ENCODE measurements at regions of chr9 and their contacts with region 1.

Region 1: GRCh38 chr9:32526041-32526706 is at the start of gene RIGI:
- DNase-seq: peak; percentile 83
- ATAC-seq: peak; percentile 84
- H3K4me3 Mint-ChIP-seq: peak within 1 kb of the TSS; percentile 82
- H3K27ac Mint-ChIP-seq: peak within 1 kb of the TSS; percentile 97
- H3K4me1 Mint-ChIP-seq: peaks cover 14% of the 10 kb centered on the region
- H3K27me3 Mint-ChIP-seq: no peaks in the 10 kb centered on the region
- CTCF ChIP-seq: peak; percentile 41; the same call in 1 of the 2 replicates
- total RNA-seq, gene RIGI: 6.0 to 7.5 TPM (median 6.2 TPM) in 3 replicates

Region 2: DNA sequence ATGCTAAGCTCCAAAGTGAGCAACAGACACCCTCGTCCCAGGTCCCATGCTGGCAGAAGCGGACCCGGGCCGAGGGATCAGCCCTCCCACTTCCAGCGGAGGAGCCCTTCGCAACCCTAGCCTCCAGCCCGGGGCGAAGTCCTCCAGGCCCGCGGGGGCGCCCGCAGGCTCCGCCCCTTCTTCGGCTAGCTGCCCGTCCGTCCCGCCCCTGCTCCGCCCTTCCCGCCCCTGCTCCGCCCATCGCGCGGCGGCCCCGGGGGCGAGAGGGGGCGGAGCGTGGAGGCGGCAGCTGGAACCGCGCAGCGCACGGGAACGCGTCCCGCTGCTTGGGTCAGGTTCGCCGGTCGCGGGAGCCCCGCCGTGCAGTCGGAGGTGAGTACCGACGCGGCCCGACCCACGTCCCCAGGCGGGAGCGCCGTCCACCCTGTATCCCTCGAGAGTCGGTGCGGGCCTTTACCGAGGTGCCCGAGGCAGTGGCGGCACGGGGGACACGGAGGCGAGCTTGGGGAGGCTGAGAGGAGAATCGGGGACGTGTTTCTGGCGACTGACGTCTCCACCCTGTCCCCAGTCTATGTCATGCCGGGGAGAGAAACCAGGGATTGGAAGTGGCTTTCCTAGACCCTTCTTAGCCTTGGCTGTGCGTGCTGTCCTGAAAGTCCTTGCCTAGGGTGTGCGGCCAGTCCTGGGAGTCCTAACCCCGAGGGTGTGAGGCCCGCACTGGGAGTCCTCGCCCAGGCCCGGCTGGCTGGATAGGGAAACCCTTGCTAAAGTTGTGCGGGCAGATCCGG is 141.6 kb before region 1 on chr9 and contains the start of gene ACO1:
- CTCF ChIA-PET with region 1: interaction called, 94 read pairs
- POLR2A ChIA-PET with region 1: interaction called, 5 read pairs
- DNase-seq: peak; percentile 92
- ATAC-seq: peak; percentile 94
- H3K4me3 Mint-ChIP-seq: peak within 1 kb of the TSS; percentile 86
- H3K27ac Mint-ChIP-seq: no peak within 1 kb of the TSS
- H3K4me1 Mint-ChIP-seq: peaks cover 18% of the 10 kb centered on the region
- H3K27me3 Mint-ChIP-seq: peaks cover 31% of the 10 kb centered on the region
- CTCF ChIP-seq: no peak
- total RNA-seq, gene ACO1: 40.2 to 44.8 TPM (median 44.5 TPM) in 3 replicates

Region 3: GRCh38 chr9:32502464-32502863 is 23.7 kb before region 1 on chr9:
- CTCF ChIA-PET with region 1: interaction called, 26 read pairs
- POLR2A ChIA-PET with region 1: interaction called, 3 read pairs
- DNase-seq: no peak
- ATAC-seq: no peak
- H3K4me3 Mint-ChIP-seq: no peak overlapping the region
- H3K27ac Mint-ChIP-seq: peak overlapping the region; percentile 28; the same call in 1 of the 2 replicates
- H3K4me1 Mint-ChIP-seq: peaks cover 9% of the 10 kb centered on the region
- H3K27me3 Mint-ChIP-seq: no peaks in the 10 kb centered on the region
- CTCF ChIP-seq: no peak

Region 4: GRCh38 chr9:32550562-32551433 is 24.6 kb after region 1 on chr9:
- CTCF ChIA-PET with region 1: interaction called, 25 read pairs
- POLR2A ChIA-PET with region 1: interaction called, 36 read pairs
- DNase-seq: peak; percentile 98
- ATAC-seq: peak; percentile 90
- H3K4me3 Mint-ChIP-seq: peak overlapping the region; percentile 91
- H3K27ac Mint-ChIP-seq: peak overlapping the region; percentile 98
- H3K4me1 Mint-ChIP-seq: peaks cover 24% of the 10 kb centered on the region
- H3K27me3 Mint-ChIP-seq: no peaks in the 10 kb centered on the region
- CTCF ChIP-seq: no peak

Region 5: GRCh38 chr9:32579706-32580331 is 53.6 kb after region 1 on chr9:
- CTCF ChIA-PET with region 1: interaction called, 26 read pairs
- POLR2A ChIA-PET with region 1: no interaction called
- DNase-seq: peak; percentile 76
- ATAC-seq: no peak
- H3K4me3 Mint-ChIP-seq: no peak overlapping the region
- H3K27ac Mint-ChIP-seq: no peak overlapping the region
- H3K4me1 Mint-ChIP-seq: peaks cover 11% of the 10 kb centered on the region
- H3K27me3 Mint-ChIP-seq: no peaks in the 10 kb centered on the region
- CTCF ChIP-seq: peak; percentile 85

Measured in WTC11 (cell line).